H1 (cell line): ENCODE measurements at regions of chr3 and their contacts with region 1.

Region 1: GRCh38 chr3:45923755-45924154 is 19.5 kb upstream of the CXCR6 start:
- DNase-seq: no peak
- H3K4me3 ChIP-seq: no peak overlapping the region
- H3K27ac ChIP-seq: no peak overlapping the region
- H3K4me1 ChIP-seq: no peaks in the 10 kb centered on the region
- H3K27me3 ChIP-seq: no peaks in the 10 kb centered on the region
- CTCF ChIP-seq: no peak
- EP300 ChIP-seq: no peak
- POLR2A ChIP-seq: no peak
- RAD21 ChIP-seq: no peak

Region 2: DNA sequence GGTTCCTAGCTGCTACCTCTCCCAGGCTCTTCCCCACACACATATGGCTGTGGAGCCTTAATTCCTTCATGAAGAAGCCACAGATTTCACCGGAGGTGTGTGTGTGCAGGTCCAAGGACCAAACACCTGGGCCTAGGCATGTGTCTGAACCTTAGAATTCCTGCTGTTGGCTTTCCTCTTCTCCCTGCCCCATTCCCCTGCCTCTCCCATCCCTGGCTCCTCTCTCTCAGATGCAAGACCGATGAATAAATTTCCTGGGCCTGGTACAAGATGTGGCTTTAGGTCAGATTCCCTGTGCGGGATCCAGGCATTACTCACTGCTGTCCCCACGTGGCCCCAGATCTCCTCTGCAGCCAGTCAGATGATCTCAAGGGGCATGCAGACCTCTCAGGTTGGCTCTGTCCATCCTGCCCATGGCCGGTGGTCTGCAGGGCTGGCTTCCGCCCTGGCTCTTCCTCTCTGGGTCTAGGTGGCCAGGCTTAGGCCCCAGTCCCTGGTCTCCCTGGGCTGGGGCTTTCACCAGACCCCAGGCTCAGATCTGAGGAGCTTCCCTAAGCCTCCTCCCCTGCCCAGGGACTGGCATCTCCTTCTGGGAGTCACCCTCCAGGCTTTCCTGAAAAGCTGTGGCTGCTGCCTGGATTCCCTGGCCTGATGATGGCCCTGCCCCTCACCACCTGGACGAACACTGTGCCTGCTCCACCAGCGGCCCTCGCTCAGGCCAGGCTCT is 16.9 kb before region 1 on chr3:
- CTCF ChIA-PET with region 1: interaction called, 10 read pairs
- POLR2A ChIA-PET with region 1: interaction called, 5 read pairs
- DNase-seq: no peak
- H3K4me3 ChIP-seq: no peak overlapping the region
- H3K27ac ChIP-seq: no peak overlapping the region
- H3K4me1 ChIP-seq: no peaks in the 10 kb centered on the region
- H3K27me3 ChIP-seq: no peaks in the 10 kb centered on the region
- CTCF ChIP-seq: peak; percentile 63 to 79 (median 76)
- EP300 ChIP-seq: no peak
- POLR2A ChIP-seq: no peak
- RAD21 ChIP-seq: peak; percentile 67 to 73